ENCODE measurements at regions of chr2 and their contacts with region 1.

Region 1: GRCh38 chr2:156341452-156342253 is 9.1 kb upstream of the NR4A2 start:
- DNase-seq: peak in 1 of 2 donors; percentile 97
- H3K4me3 ChIP-seq: peak overlapping the region; percentile 76 to 96
- H3K27ac ChIP-seq: peak overlapping the region; percentile 100
- H3K4me1 ChIP-seq: peaks cover 10% of the 10 kb centered on the region
- H3K27me3 ChIP-seq: no peaks in the 10 kb centered on the region
- CTCF ChIP-seq: no peak
- POLR2A ChIP-seq: peak in 1 of 2 donors; percentile 82

Region 2: GRCh38 chr2:156294945-156295580 is 46.6 kb before region 1 on chr2:
- intact Hi-C with region 1: no loop called
- DNase-seq: no peak
- H3K4me3 ChIP-seq: no peak overlapping the region
- H3K27ac ChIP-seq: no peak overlapping the region
- H3K4me1 ChIP-seq: no peaks in the 10 kb centered on the region
- H3K27me3 ChIP-seq: no peaks in the 10 kb centered on the region
- CTCF ChIP-seq: no peak
- POLR2A ChIP-seq: no peak

Region 3: DNA sequence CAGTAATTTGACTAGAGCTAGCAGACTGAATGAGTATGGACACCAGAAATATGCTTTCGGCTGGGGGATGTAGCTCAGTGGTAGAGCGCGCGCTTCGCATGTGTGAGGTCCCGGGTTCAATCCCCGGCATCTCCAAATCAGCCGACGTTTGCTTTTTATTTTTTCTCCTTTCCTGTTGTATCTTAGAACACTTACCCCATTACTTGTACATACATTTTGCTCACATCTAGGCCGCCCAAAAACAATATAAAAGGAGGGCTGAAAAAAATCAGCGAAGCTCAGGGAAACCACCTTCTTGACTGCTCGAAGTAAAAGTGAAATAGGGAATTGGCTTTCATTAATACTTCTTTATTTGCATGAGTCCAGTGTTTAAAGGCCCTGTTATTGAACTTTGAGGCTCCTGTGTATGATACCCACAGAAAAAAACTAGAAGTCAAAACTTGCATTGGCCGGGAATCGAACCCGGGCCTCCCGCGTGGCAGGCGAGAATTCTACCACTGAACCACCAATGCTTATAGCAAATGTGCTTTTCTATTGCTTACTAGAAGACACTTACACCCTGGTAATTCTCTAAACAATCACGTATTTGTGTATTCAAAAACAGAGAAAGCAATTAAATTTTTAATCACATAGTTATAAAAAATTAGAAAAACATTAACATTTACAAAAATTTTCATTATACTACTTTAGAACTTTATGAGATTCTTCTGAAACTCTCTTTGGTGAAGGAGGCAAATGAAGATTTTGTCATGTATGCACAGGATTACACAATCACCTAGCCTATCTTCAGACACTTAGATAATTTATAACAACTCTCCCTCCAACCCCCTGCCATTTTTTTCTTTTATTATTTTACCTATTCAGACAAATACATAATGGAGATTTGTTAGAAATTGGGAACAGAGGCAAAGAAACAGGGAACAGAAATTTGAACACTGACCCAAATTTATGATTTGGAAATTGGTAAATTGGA is 59.3 kb after region 1 on chr2:
- intact Hi-C with region 1: loop called (anchors 2 kb)
- DNase-seq: peak in 1 of 2 donors; percentile 92
- H3K4me3 ChIP-seq: peak overlapping the region; percentile 58
- H3K27ac ChIP-seq: peak overlapping the region; percentile 97
- H3K4me1 ChIP-seq: peaks cover 13% of the 10 kb centered on the region
- H3K27me3 ChIP-seq: no peaks in the 10 kb centered on the region
- CTCF ChIP-seq: no peak
- POLR2A ChIP-seq: no peak

Region 4: DNA sequence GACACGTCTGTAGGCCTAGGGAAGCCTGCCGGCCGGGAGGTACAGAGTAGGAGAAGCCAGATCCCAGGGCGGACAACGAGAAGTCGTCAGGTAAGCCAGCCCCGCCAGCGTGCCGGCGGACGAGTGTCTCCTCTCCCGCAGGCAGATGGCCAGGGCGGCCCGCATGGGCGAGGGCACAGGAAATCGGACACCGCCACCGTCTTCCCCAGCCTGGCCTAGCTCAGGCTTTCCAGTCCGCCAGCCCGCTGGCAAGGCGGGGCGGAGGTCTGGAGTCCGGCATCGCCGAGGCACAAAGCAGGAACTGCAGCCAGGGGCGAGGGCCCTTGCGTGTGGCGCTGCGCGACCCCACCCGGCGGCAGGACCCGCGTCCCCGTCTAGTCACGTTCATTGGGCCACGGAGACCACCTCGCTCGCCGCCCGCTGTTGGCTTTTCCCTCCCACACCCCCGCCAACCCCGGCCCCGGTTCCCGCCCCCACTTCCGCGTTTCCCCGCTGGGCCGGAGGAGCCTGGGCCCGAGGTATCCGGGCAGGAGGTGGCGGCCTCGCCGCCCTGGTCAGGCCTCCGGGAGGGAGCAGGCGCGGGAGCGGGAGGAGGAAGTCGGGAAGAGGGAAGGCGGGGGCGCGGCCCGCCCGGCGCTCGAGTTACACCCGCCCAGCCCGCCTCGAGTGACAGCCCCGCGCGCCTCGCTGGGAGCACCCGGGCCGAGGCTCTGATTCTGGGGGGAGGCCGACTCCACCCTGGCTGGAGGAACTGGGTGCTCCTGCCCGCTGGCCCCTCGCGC is 94.3 kb after region 1 on chr2 and contains the start of gene GPD2:
- intact Hi-C with region 1: loop called (anchors 10 kb)
- DNase-seq: peak in 1 of 2 donors; percentile 91
- H3K4me3 ChIP-seq: peak within 1 kb of the TSS; percentile 55 to 66
- H3K27ac ChIP-seq: peak within 1 kb of the TSS; percentile 94
- H3K4me1 ChIP-seq: peaks cover 38% of the 10 kb centered on the region
- H3K27me3 ChIP-seq: no peaks in the 10 kb centered on the region
- CTCF ChIP-seq: no peak
- POLR2A ChIP-seq: peak in 1 of 2 donors; percentile 63
- total RNA-seq, gene GPD2: 30.4 TPM

Measured in vagina (tissue), 2 donors.